Activated CD4-positive, alpha-beta T cell treated with anti-CD3 and anti-CD28 coated beads for 36 hours (primary cell): ENCODE measurements at regions of chr16 and their contacts with region 1.

Region 1: DNA sequence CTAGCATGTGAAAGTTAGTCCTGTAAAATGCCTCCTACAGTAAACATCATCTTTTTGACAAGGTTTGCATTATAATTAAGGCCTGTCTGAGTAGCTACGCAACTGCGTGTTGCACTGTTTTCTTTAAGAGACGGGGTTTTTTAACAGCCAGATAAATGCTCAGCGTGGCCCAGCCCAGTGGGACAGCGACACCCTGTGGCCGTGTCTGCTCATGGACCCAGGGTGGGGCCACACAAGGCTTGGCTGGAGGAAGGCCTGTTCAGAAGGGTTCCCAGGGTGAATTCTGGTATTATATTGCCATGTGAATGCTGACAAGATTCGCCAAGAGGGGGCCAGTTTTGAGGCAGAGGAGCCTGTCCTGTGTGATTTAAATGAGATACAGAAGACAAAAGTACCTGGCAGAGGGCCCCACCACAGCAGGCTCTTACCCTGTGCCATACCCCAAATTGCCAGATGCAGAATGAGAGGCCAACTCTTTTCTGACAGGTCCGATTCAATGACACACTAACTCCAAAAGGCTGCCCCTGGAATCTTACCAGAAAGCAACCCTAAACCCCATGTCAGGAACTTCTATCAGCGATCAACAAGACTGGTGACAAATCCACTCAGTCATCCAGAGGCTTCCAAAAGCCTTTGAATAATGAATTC is 65.9 kb upstream of the IRX6 start:
- DNase-seq: peak; percentile 79
- ATAC-seq: peak; percentile 63
- H3K4me3 Mint-ChIP-seq: no peak overlapping the region
- H3K27ac Mint-ChIP-seq: no peak overlapping the region
- H3K4me1 Mint-ChIP-seq: peaks cover 2% of the 10 kb centered on the region
- H3K27me3 Mint-ChIP-seq: peaks cover 6% of the 10 kb centered on the region

Region 2: GRCh38 chr16:53549970-53550690 is 1708.0 kb before region 1 on chr16:
- CTCF ChIA-PET with region 1: no interaction called
- POLR2A ChIA-PET with region 1: no interaction called
- intact Hi-C with region 1: loop called in 1 of 2 experiments (anchors 5 kb)
- DNase-seq: peak; percentile 69
- ATAC-seq: peak; percentile 82
- H3K4me3 Mint-ChIP-seq: no peak overlapping the region
- H3K27ac Mint-ChIP-seq: no peak overlapping the region
- H3K4me1 Mint-ChIP-seq: peaks cover 29% of the 10 kb centered on the region
- H3K27me3 Mint-ChIP-seq: peaks cover 19% of the 10 kb centered on the region

Region 3: GRCh38 chr16:53892155-53892554 is 1365.9 kb before region 1 on chr16:
- CTCF ChIA-PET with region 1: interaction called, 3 read pairs
- POLR2A ChIA-PET with region 1: no interaction called
- intact Hi-C with region 1: loop called in 1 of 2 experiments (anchors 10 kb)
- DNase-seq: peak; percentile 69
- ATAC-seq: peak; percentile 71
- H3K4me3 Mint-ChIP-seq: no peak overlapping the region
- H3K27ac Mint-ChIP-seq: no peak overlapping the region
- H3K4me1 Mint-ChIP-seq: peaks cover 5% of the 10 kb centered on the region
- H3K27me3 Mint-ChIP-seq: no peaks in the 10 kb centered on the region

Region 4: DNA sequence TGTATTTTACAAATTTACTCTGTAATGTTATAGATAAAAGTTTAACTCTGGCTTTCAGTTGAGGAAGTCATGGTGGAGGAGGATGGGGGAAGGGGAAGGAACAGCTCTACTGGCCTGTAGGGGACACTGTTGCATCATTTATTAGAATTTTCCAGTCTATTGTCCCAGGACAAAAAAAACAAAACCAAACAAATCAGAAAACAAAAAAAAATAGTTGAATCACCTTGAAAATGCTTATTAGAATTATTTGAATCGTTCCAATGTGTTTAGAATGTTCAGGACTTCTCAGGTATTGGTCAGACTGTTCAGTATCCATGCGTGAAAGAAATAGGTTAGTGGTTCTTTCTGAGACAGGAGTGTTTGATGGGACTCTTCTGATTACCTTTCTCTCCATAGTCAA is 1312.1 kb before region 1 on chr16:
- CTCF ChIA-PET with region 1: no interaction called
- POLR2A ChIA-PET with region 1: no interaction called
- intact Hi-C with region 1: loop called in 1 of 2 experiments (anchors 10 kb)
- DNase-seq: no peak
- ATAC-seq: no peak
- H3K4me3 Mint-ChIP-seq: no peak overlapping the region
- H3K27ac Mint-ChIP-seq: no peak overlapping the region
- H3K4me1 Mint-ChIP-seq: peaks cover under 1% of the 10 kb centered on the region
- H3K27me3 Mint-ChIP-seq: no peaks in the 10 kb centered on the region

Region 5: DNA sequence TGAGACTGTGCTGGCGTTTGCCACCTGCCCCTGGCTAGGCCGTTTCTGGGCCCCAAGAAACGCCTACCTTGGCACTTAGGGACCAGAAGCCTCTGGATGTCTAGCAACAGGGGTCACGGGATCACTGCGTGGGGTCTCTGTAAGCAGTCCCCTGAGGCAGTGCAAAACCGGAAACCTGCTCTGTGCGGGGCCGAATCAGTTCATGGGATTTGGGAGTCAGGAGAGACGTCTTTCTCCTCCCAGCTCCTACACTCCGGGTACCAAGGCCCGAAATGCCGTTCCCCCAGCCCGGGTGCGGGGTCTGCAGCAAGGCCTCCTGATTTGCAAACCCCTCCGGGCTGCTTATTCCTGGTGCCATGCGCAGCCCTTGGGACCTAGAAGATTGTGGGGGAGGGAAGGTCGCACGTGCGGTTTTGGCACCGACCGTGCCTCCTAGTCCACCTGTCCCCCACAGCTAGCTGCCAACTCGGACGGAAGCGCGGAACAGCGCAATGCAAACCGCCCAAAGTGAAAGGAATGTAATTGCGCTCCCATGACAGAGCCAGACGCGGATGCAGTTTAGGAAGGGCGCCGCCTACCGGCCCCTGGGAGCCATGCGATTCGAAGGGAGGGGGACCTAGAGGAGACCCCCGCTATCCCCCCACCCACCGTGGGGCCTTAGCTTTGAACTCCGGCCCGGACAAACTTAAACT is 321.0 kb before region 1 on chr16:
- CTCF ChIA-PET with region 1: no interaction called
- POLR2A ChIA-PET with region 1: no interaction called
- intact Hi-C with region 1: loop called in 1 of 2 experiments (anchors 1 kb)
- DNase-seq: peak; percentile 63
- ATAC-seq: peak; percentile 57
- H3K4me3 Mint-ChIP-seq: peak overlapping the region; percentile 43
- H3K27ac Mint-ChIP-seq: no peak overlapping the region
- H3K4me1 Mint-ChIP-seq: peaks cover 16% of the 10 kb centered on the region
- H3K27me3 Mint-ChIP-seq: peaks cover 81% of the 10 kb centered on the region

Region 6: GRCh38 chr16:55035029-55035428 is 223.1 kb before region 1 on chr16:
- CTCF ChIA-PET with region 1: interaction called, 6 read pairs
- POLR2A ChIA-PET with region 1: no interaction called
- intact Hi-C with region 1: loop called (anchors 1 to 2 kb)
- DNase-seq: peak; percentile 70
- ATAC-seq: peak; percentile 44
- H3K4me3 Mint-ChIP-seq: no peak overlapping the region
- H3K27ac Mint-ChIP-seq: no peak overlapping the region
- H3K4me1 Mint-ChIP-seq: no peaks in the 10 kb centered on the region
- H3K27me3 Mint-ChIP-seq: peaks cover 4% of the 10 kb centered on the region